ENCODE measurements at regions of chr7 and their contacts with region 1.

Region 1: DNA sequence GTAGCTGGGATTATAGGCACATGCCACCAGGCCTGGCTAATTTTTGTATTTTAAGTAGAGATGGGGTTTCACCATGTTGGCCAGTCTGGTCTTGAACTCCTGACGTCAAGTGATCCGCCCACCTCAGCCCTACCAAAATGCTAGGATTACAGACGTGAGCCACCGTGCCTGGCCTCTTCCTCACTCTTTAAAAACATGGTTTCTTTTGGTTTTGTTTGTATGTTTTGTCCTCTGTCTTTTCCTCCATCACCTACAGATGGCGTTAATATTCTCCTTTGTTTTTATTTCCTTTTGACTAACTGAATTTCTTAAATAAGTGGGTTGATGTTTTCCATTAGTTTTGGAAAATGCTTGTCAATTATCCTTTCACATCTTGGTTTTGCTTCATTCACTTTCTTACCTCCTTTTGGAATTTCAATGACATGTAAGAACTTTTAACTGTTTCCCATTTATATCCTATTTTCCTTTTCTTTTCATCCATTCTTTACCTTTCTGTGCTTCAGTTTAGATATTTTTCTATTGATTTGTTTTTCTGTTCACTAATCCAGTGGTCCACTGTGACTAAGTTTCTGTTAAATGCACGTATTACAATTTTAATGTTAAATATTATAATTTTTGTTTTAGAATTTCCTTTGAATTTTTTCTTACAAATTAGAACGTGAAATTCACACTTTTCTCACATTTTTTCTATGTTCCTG is 104.1 kb downstream of the ZNF467 start:
- DNase-seq: peak in 1 of 4 experiments; percentile 41
- ATAC-seq: peak; percentile 63
- H3K4me3 ChIP-seq: no peak overlapping the region
- H3K27ac ChIP-seq: no peak overlapping the region
- H3K4me1 ChIP-seq: no peaks in the 10 kb centered on the region
- H3K27me3 ChIP-seq: peaks cover 14 to 23% of the 10 kb centered on the region in 2 experiments; a peak in 3 of 5 replicates
- CTCF ChIP-seq: peak; percentile 53 to 77 (median 56); a peak in 5 of 6 replicates
- EP300 ChIP-seq: no peak
- POLR2A ChIP-seq: no peak
- RAD21 ChIP-seq: peak; percentile 50 to 81

Region 2: DNA sequence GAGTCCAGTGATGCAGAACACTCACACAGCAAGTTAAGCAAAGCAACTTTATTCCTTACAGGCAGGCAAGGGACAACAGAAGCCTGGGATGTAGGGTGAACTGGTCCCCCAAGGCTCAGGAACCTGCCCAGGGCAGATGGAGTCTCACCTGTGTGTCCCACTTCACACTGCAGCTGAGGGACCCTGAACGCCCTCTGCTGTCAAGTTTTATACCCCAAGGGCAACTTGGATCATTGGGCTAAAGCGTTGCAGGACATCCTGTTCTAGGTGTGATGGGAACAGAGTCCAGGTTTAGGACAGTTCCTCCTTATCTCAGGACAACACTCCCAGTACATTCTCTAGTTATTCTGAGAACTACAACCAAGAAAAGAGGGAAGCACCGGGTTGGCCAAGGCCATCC is 122.1 kb before region 1 on chr7:
- CTCF ChIA-PET with region 1: no interaction called
- POLR2A ChIA-PET with region 1: no interaction called
- in situ Hi-C with region 1: no loop called
- intact Hi-C with region 1: no loop called
- DNase-seq: no peak
- ATAC-seq: peak; percentile 53
- H3K4me3 ChIP-seq: no peak overlapping the region
- H3K27ac ChIP-seq: no peak overlapping the region
- H3K4me1 ChIP-seq: no peaks in the 10 kb centered on the region
- H3K27me3 ChIP-seq: no peaks in the 10 kb centered on the region; a peak in 1 of 5 replicates
- CTCF ChIP-seq: peak in 2 of 3 experiments; percentile 19 to 20; a peak in 1 of 6 replicates
- EP300 ChIP-seq: no peak
- POLR2A ChIP-seq: no peak
- RAD21 ChIP-seq: no peak

Region 3: GRCh38 chr7:149690688-149691446 is 21.6 kb after region 1 on chr7:
- CTCF ChIA-PET with region 1: interaction called, 3 read pairs
- POLR2A ChIA-PET with region 1: interaction called, 10 read pairs
- in situ Hi-C with region 1: no loop called
- intact Hi-C with region 1: loop called (anchors 2 kb)
- DNase-seq: peak; percentile 79 to 91 (median 83)
- ATAC-seq: peak; percentile 93
- H3K4me3 ChIP-seq: peak overlapping the region; percentile 37
- H3K27ac ChIP-seq: peak overlapping the region; percentile 10; the same call in 1 of the 3 replicates
- H3K4me1 ChIP-seq: peaks cover 8 to 11% of the 10 kb centered on the region in 2 experiments; a peak in 4 of 5 replicates
- H3K27me3 ChIP-seq: peaks cover 0 to 9% of the 10 kb centered on the region in 2 experiments; a peak in 2 of 5 replicates
- CTCF ChIP-seq: no peak
- EP300 ChIP-seq: peak; percentile 72
- POLR2A ChIP-seq: no peak
- RAD21 ChIP-seq: no peak

Region 4: GRCh38 chr7:149742075-149742701 is 72.9 kb after region 1 on chr7:
- CTCF ChIA-PET with region 1: interaction called, 12 read pairs
- POLR2A ChIA-PET with region 1: interaction called, 6 read pairs
- in situ Hi-C with region 1: loop called (anchors 5 kb)
- intact Hi-C with region 1: loop called (anchors 1 kb)
- DNase-seq: peak; percentile 89 to 92 (median 91)
- ATAC-seq: peak; percentile 96
- H3K4me3 ChIP-seq: no peak overlapping the region
- H3K27ac ChIP-seq: no peak overlapping the region
- H3K4me1 ChIP-seq: peaks cover 4 to 7% of the 10 kb centered on the region in 2 experiments; a peak in 4 of 5 replicates
- H3K27me3 ChIP-seq: peaks cover 10 to 18% of the 10 kb centered on the region in 2 experiments
- CTCF ChIP-seq: peak; percentile 96 to 99 (median 97)
- EP300 ChIP-seq: peak; percentile 31
- POLR2A ChIP-seq: no peak
- RAD21 ChIP-seq: peak; percentile 94 to 99

Region 5: DNA sequence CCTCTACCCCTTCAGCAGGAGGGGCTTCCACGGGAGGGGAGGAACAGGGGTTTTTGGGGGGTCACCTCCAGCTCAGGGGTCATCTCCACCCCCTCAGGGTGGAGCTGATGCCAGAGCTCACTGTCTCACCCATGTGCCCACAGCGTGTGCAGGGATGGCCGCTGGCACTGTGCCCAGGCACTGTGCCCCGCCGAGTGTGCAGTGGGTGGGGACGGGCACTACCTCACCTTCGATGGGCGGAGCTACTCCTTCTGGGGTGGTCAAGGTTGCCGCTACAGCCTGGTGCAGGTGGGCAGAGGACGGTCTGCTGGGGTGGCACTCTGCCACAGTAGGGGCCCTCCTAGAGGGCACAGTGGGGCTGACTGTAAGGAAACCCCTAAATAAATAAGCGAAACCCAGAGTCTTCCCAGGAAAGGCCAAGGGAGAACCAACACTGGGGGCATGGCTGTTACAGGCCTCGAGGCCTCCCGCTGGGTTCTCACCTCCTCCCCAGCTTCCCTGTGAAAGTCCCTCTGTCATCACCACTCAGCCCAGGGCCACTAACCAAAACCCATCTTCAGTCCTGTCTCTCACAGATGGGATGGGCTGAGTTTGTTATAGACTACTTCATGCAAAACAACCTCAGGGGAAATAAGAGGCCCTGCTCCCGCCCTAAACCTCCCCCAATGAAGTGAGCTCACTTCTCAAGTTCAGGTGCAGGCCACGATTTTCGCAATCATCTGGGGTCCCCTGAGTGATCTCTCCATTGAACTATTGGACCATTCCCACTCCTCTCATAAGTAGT is 111.6 kb after region 1 on chr7:
- CTCF ChIA-PET with region 1: no interaction called
- POLR2A ChIA-PET with region 1: no interaction called
- in situ Hi-C with region 1: no loop called
- intact Hi-C with region 1: no loop called
- DNase-seq: no peak
- ATAC-seq: no peak
- H3K4me3 ChIP-seq: no peak overlapping the region
- H3K27ac ChIP-seq: no peak overlapping the region
- H3K4me1 ChIP-seq: peaks cover 0 to 77% of the 10 kb centered on the region in 2 experiments; a peak in 3 of 5 replicates
- H3K27me3 ChIP-seq: peaks cover 0 to 5% of the 10 kb centered on the region in 2 experiments; a peak in 3 of 5 replicates
- CTCF ChIP-seq: no peak
- EP300 ChIP-seq: no peak
- POLR2A ChIP-seq: no peak
- RAD21 ChIP-seq: no peak

Measured in K562 (cell line).